ENCODE measurements at regions of chr2 and their contacts with region 1.

Region 1: GRCh38 chr2:26691881-26692278 is 642 bp upstream of the KCNK3 start:
- DNase-seq: peak; percentile 66 to 95
- H3K4me3 ChIP-seq: peak overlapping the region; percentile 30 to 56
- H3K27ac ChIP-seq: peak overlapping the region; percentile 78 to 87
- H3K4me1 ChIP-seq: peaks cover 0 to 40% (median 29%) of the 10 kb centered on the region in 4 donors
- H3K27me3 ChIP-seq: peaks cover 0 to 6% of the 10 kb centered on the region in 2 donors
- CTCF ChIP-seq: no peak

Region 2: DNA sequence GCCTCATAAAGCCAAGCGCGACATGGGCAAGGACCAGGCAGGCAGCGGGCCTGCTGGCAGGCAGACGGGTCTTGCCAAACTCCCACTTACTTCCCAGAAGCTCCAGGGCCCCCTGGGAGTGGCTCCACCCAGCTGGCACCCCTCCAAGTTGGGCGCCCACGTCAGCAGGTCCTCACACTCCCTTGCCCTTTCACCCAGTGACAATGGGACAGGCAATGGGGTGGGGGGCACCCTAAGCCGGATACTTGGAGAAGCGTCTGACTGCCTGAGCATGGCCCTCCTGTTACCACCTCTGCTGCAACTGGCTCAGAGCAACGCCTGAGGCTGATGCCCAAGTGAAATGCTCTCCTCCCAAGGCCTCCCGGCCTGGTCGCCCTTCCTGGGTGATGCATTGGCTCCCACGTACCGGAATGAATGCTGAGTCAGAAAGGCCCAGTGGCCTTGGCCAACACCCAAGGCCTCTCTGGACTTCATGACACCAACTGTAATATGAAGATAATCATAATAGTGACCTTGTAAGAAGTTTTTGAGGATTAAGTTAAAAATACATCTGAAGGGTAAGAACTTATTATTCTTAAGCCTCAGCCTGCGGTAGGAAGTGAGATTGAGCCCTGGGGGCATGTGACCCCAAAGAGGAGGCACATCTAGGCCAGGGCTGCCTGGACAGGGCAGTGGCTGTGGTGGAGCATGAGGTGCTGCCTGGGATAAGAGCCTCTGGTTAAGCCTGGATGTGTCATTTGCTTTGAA is 32.3 kb after region 1 on chr2:
- intact Hi-C with region 1: loop called (anchors 2 kb)
- DNase-seq: peak; percentile 70 to 94
- H3K4me3 ChIP-seq: no peak overlapping the region
- H3K27ac ChIP-seq: peak overlapping the region; percentile 83 to 88
- H3K4me1 ChIP-seq: peaks cover 0 to 64% (median 53%) of the 10 kb centered on the region in 4 donors
- H3K27me3 ChIP-seq: no peaks in the 10 kb centered on the region
- CTCF ChIP-seq: no peak

Region 3: DNA sequence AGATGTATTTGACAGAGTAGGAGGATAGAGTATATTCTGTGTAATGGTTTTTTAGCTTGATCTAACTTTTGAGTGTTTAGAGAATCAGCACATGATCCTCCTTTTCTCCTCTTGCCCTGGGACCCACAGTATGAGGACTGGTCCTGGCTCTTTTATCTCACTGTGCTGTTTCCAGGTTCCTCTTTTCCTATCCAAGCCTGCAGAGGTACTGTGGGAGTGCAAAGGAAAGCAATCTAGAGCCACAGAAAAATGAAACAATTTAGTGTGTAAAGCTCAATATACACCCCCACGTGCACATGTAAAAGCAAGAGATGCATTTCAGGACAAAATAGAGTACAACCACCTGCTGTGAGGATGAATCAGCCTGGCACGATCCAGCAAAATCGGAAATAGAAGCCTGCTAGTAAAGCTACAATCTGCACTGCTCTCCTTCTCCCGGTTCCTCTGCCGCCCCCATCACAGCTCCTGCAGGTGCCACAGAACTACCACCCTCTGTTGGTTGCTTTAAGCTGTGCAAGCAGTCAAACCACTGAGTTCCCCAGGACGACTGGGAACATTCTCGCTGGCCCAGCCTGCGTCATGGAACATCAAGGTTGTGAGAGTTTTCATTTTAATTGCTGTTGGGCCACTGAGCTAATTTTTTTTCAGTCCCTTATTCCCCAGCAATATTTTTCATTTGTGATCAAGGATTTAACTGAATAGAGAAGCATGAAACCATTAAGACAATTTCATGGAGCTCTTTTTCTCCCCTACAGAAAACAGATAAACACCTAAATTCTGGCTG is 230.7 kb after region 1 on chr2:
- intact Hi-C with region 1: no loop called
- DNase-seq: peak; percentile 31 to 63
- H3K4me3 ChIP-seq: no peak overlapping the region
- H3K27ac ChIP-seq: no peak overlapping the region
- H3K4me1 ChIP-seq: no peaks in the 10 kb centered on the region
- H3K27me3 ChIP-seq: peaks cover 0 to 18% of the 10 kb centered on the region in 2 donors
- CTCF ChIP-seq: peak; percentile 42 to 44